ENCODE measurements at regions of chr4 and their contacts with region 1.

Region 1: DNA sequence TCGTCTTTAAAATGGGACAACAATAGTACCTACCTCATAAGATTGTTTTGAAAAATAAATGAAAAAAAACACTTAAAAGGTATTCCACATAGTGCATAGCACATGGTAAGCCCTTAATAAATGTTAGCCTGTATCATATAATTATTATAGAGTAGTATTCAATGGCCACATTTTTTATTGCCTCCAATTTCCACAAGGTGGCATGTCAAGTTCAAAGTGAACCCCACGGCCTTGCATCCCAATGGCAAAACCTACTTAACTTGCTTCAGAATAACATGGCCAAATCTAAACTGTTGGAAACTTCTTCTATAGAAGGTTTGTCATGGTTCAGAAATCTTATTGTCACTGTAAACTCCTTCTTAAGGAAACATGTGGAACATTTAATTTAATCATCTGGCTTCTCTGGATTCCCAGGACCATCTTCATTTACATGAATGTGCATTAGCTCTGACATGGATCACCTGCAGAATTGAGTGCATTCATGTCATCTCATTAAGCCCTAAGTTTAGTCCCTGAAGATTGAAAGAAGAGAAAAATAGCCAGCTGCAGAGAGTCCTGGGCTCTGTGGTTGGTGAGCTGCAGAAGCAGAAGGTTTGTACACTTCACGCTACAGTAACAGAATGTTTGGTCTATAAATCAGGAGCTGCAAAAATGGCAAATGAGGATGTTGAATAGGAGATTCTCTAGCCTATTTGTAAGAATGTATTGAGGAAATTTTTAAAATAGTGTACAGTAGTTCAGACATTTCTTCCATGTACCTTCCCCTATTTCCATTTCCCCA is 61.0 kb downstream of the ANXA3 start:
- DNase-seq: peak; percentile 82
- H3K4me3 ChIP-seq: no peak overlapping the region
- H3K27ac ChIP-seq: no peak overlapping the region
- H3K4me1 ChIP-seq: peaks cover 46% of the 10 kb centered on the region
- CTCF ChIP-seq: peak; percentile 97

Region 2: DNA sequence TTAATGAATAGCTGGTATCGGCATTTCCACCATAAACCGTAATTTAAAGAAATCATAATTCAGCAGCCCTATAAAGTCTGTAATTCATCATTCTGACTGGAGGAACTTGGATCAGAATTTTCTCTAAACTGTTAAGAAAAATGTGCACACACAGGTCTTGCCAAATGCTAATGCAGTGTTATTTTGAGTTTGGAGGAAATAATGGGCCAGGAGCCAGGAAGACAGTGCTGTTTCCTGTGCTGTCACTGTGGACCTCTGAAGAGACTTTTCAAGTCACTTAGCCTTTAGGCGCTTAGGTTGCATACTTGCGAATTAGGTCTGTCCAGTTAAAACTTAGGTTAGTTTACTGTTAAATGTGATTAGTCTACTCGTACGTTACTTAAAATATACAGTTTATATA is 198.5 kb before region 1 on chr4:
- CTCF ChIA-PET with region 1: no interaction called
- POLR2A ChIA-PET with region 1: no interaction called
- intact Hi-C with region 1: no loop called
- DNase-seq: no peak
- H3K4me3 ChIP-seq: no peak overlapping the region
- H3K27ac ChIP-seq: no peak overlapping the region
- H3K4me1 ChIP-seq: no peaks in the 10 kb centered on the region
- CTCF ChIP-seq: no peak

Region 3: DNA sequence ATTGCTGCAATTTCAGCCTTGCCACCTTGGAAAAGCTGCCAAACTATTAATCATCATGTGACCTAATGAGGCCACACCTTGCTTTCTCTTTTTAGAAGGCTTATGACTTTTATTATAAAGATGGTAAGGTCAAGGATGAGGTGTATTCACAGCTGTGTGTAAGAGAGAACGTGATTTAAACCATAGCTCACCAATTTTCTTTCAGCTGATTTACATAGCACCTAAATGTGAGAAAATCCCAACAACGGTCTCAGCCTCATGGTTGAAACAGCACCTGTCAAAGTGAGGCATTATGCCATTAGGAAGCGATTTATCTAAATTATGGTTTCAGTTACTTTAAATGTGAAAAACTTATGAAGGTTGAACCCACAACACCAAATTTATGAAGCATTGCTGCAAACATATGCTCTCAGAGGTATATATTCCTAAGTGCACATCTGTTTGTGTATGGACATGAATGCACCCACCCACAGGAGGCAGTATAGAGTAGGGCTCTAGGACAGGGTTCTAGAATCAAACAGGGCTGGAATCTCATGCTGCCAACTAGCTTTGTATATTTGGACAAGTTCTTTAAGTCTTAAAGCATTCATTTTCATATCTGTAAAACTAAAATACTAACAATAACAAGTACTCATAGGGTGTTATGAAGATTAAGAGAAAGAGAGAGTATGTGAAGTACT is 20.3 kb before region 1 on chr4:
- CTCF ChIA-PET with region 1: no interaction called
- POLR2A ChIA-PET with region 1: interaction called, 13 read pairs
- intact Hi-C with region 1: no loop called
- DNase-seq: peak; percentile 30
- H3K4me3 ChIP-seq: no peak overlapping the region
- H3K27ac ChIP-seq: no peak overlapping the region
- H3K4me1 ChIP-seq: no peaks in the 10 kb centered on the region
- CTCF ChIP-seq: peak; percentile 78

Region 4: GRCh38 chr4:78638337-78639172 is 26.0 kb after region 1 on chr4:
- CTCF ChIA-PET with region 1: no interaction called
- POLR2A ChIA-PET with region 1: interaction called, 10 read pairs
- intact Hi-C with region 1: no loop called
- DNase-seq: peak; percentile 51
- H3K4me3 ChIP-seq: no peak overlapping the region
- H3K27ac ChIP-seq: peak overlapping the region; percentile 38
- H3K4me1 ChIP-seq: peaks cover 13% of the 10 kb centered on the region
- CTCF ChIP-seq: no peak

Region 5: DNA sequence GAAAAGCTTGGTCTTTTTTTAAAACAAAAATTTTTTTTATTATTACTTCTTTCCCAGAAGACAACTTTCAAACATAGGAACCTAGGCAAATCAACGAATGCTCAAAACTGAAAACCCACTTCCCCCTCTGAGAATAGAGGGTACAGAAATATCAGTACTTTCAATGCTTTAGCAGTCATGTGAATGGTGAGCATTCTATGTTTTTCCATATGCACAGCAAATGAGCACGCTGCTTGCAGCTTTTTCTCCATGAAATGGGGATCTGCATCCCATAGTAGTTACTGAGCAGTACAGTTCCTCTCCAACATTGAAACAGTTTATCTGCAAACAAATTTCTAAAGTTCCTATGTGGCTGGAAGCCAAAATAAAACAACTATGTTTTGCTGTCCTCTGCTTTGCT is 55.2 kb after region 1 on chr4:
- CTCF ChIA-PET with region 1: no interaction called
- POLR2A ChIA-PET with region 1: no interaction called
- intact Hi-C with region 1: loop called (anchors 5 kb)
- DNase-seq: peak; percentile 50
- H3K4me3 ChIP-seq: no peak overlapping the region
- H3K27ac ChIP-seq: no peak overlapping the region
- H3K4me1 ChIP-seq: peaks cover 39% of the 10 kb centered on the region
- CTCF ChIP-seq: no peak

Region 6: DNA sequence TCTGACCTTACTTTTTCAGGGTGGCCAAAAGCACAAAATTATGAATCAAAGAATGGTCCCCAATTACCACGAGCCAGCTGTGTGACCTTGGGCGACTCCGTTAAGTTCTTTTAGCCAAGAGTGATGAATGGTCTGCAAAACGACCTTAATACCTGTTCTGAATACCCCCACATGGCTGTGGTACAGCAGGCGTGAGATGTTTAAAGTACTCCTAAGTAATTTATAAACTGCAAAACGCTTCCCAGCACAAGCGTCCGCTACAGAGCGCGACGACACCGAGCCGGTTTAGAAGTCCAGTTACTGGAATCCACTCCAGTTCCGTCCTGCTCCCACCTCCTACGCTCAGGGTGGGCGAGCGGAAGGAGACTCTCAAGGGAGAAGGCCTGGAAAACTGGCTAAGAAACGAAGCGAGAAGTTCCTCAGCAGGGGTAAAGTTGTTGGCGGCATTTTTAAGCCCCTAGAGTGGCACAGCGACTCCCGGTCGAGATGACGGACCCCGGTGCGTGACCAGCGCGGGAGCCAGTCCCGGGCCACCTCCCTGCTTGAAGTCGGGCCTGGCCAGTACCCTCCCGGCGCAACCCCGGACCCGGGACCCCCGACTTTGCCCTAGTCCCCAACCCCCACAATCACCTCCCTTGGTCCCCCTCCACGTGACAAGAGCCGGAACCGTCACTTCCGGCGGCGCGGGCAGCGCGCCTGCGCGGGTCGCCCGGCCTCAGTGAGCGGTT is 162.9 kb after region 1 on chr4:
- CTCF ChIA-PET with region 1: interaction called, 4 read pairs
- POLR2A ChIA-PET with region 1: interaction called, 4 read pairs
- intact Hi-C with region 1: loop called (anchors 1 kb)
- DNase-seq: peak; percentile 89
- H3K4me3 ChIP-seq: peak overlapping the region; percentile 76
- H3K27ac ChIP-seq: peak overlapping the region; percentile 82
- H3K4me1 ChIP-seq: peaks cover 42% of the 10 kb centered on the region
- CTCF ChIP-seq: no peak

Region 7: GRCh38 chr4:78938868-78939666 is 326.5 kb after region 1 on chr4 and contains the start of gene PAQR3:
- CTCF ChIA-PET with region 1: no interaction called
- POLR2A ChIA-PET with region 1: interaction called, 5 read pairs
- intact Hi-C with region 1: loop called (anchors 1 kb)
- DNase-seq: peak; percentile 92
- H3K4me3 ChIP-seq: peak within 1 kb of the TSS; percentile 100
- H3K27ac ChIP-seq: peak within 1 kb of the TSS; percentile 30
- H3K4me1 ChIP-seq: peaks cover 19% of the 10 kb centered on the region
- CTCF ChIP-seq: 0 out of 2 replicates have a peak, but pooled peaks have one; percentile 30
- total RNA-seq, gene PAQR3: 18.5 and 21.6 TPM in 2 replicates